A673 (cell line): ENCODE measurements at regions of chr9 and their contacts with region 1.

Region 1: GRCh38 chr9:88991066-88992034 is at the start of gene S1PR3:
- DNase-seq: peak; percentile 60
- H3K4me3 ChIP-seq: peak within 1 kb of the TSS; percentile 71
- H3K27ac ChIP-seq: peak within 1 kb of the TSS; percentile 61
- H3K4me1 ChIP-seq: peaks cover 50% of the 10 kb centered on the region
- H3K27me3 ChIP-seq: no peaks in the 10 kb centered on the region
- CTCF ChIP-seq: no peak; the same call in 1 of the 2 replicates
- total RNA-seq, gene S1PR3: 42.9 and 50.9 TPM in 2 replicates

Region 2: GRCh38 chr9:88458716-88459465 is 532.5 kb before region 1 on chr9:
- CTCF ChIA-PET with region 1: no interaction called
- POLR2A ChIA-PET with region 1: no interaction called
- intact Hi-C with region 1: no loop called
- DNase-seq: no peak
- H3K4me3 ChIP-seq: no peak overlapping the region
- H3K27ac ChIP-seq: peak overlapping the region; percentile 54
- H3K4me1 ChIP-seq: peaks cover 37% of the 10 kb centered on the region
- H3K27me3 ChIP-seq: no peaks in the 10 kb centered on the region
- CTCF ChIP-seq: no peak

Region 3: GRCh38 chr9:88660611-88661010 is 330.7 kb before region 1 on chr9:
- CTCF ChIA-PET with region 1: no interaction called
- POLR2A ChIA-PET with region 1: no interaction called
- intact Hi-C with region 1: loop called (anchors 2 kb)
- DNase-seq: peak; percentile 75
- H3K4me3 ChIP-seq: no peak overlapping the region
- H3K27ac ChIP-seq: no peak overlapping the region
- H3K4me1 ChIP-seq: peaks cover 14% of the 10 kb centered on the region
- H3K27me3 ChIP-seq: no peaks in the 10 kb centered on the region
- CTCF ChIP-seq: peak; percentile 73

Region 4: GRCh38 chr9:88747768-88748167 is 243.6 kb before region 1 on chr9:
- CTCF ChIA-PET with region 1: no interaction called
- POLR2A ChIA-PET with region 1: no interaction called
- intact Hi-C with region 1: loop called (anchors 10 kb)
- DNase-seq: peak; percentile 92
- H3K4me3 ChIP-seq: no peak overlapping the region
- H3K27ac ChIP-seq: peak overlapping the region; percentile 78
- H3K4me1 ChIP-seq: peaks cover 56% of the 10 kb centered on the region
- H3K27me3 ChIP-seq: no peaks in the 10 kb centered on the region
- CTCF ChIP-seq: no peak

Region 5: DNA sequence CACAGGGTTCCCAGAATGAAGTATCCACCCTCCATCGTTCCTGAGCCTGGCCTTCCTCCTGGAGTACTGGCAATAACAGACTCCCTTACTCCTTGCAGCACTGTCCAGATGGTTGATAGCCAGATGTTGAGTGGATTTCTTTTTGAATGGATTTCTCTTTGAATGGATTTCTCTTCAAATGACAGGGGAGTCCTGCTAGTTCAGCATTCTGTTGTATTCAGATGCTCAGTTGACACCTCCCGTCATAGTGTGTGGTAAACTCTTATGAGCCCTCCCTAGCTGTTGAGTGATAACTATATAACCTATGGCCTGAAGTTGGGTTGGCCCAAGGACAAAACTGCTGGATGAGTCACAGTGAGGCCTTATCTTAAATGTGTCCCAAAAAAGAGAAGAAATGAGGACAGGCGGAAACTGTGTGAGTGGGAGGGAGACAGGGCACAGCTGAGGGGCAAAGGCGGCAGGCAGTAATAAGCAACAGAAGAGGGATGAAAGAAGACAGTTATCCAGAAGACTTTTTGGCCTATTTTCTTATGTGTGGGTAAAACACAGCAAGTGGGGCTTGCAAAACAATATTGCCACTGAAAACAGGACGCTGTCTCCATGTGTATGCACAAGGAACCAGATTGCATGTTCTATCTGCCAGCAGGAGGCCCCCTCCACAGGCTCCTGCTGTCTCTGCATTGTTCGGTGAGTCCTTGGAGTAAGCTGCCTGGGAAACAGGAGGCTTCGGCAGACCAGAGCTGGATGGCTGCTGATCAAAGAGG is 209.5 kb before region 1 on chr9:
- CTCF ChIA-PET with region 1: no interaction called
- POLR2A ChIA-PET with region 1: no interaction called
- intact Hi-C with region 1: loop called (anchors 5 kb)
- DNase-seq: peak; percentile 93
- H3K4me3 ChIP-seq: no peak overlapping the region
- H3K27ac ChIP-seq: peak overlapping the region; percentile 24
- H3K4me1 ChIP-seq: peaks cover 44% of the 10 kb centered on the region
- H3K27me3 ChIP-seq: no peaks in the 10 kb centered on the region
- CTCF ChIP-seq: peak; percentile 75

Region 6: GRCh38 chr9:89318123-89319014 is 327.0 kb after region 1 on chr9 and contains the start of gene SECISBP2:
- CTCF ChIA-PET with region 1: no interaction called
- POLR2A ChIA-PET with region 1: no interaction called
- intact Hi-C with region 1: no loop called
- DNase-seq: peak; percentile 98
- H3K4me3 ChIP-seq: peak within 1 kb of the TSS; percentile 63
- H3K27ac ChIP-seq: peak within 1 kb of the TSS; percentile 99
- H3K4me1 ChIP-seq: peaks cover 31% of the 10 kb centered on the region
- H3K27me3 ChIP-seq: no peaks in the 10 kb centered on the region
- CTCF ChIP-seq: peak; percentile 83
- total RNA-seq, gene SECISBP2: 44.4 and 54.1 TPM in 2 replicates